B cell (primary cell): ENCODE measurements at regions of chr17 and their contacts with region 1.

Region 1: GRCh38 chr17:67475236-67475937 is 98.3 kb downstream of the PITPNC1 start:
- DNase-seq: peak; percentile 81
- ATAC-seq: peak; percentile 95
- H3K4me3 ChIP-seq: no peak overlapping the region
- H3K4me3 Mint-ChIP-seq: peak overlapping the region; percentile 44
- H3K27ac ChIP-seq: no peak overlapping the region
- H3K27ac Mint-ChIP-seq: peak overlapping the region; percentile 33
- H3K4me1 ChIP-seq: peaks cover 0 to 8% of the 10 kb centered on the region in 2 donors
- H3K4me1 Mint-ChIP-seq: peaks cover 10% of the 10 kb centered on the region
- H3K27me3 ChIP-seq: no peaks in the 10 kb centered on the region
- H3K27me3 Mint-ChIP-seq: no peaks in the 10 kb centered on the region
- CTCF ChIP-seq: peak; percentile 91

Region 2: DNA sequence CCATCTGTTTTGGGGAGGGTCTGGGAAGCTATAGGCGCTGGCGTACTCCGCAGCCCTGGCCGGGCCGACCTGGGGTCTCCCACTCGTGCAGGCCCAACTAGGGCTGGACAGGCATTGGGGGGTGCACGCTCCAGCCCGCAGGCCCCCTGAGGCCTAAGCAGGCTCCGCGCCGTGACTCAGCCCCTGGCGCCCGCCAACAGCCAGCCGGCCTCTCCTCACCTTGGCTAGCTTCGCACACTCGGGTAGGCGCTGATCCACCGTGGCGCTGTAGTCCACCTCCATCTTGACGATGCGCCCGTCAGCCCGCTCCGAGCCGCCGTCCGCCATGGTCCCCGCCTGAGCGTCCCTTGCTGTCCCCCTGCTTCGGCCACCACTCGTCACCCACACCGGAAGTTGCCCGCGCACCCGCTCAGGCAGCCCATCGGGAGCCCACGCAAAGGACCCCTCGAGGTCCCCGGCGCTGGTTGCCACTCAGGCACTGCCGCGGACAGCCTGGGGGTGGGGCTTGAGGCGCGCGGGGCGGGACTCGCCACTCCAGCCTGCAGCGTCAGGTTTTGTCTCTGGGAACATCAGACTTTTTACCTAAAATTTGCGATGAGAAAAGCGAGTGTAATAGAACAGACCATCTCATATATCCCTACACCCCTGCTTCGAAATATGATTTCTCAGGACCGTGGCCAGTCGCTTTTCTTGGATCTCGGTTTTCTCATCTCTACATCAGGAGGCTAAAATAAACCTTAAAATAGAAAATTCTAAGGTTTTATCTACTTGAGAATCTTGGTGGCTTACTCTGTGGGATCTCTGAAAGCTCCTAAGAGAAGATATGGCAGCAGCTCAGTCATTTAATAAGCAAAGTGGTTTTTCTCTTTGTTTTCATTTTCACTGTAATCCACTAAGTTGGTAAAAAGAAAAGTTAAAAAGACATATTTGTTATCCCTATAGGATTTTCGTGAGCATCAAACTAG is 108.9 kb before region 1 on chr17 and contains the start of gene PSMD12:
- CTCF ChIA-PET with region 1: interaction called, 178 read pairs
- POLR2A ChIA-PET with region 1: no interaction called
- intact Hi-C with region 1: no loop called
- DNase-seq: peak; percentile 92
- ATAC-seq: peak; percentile 99
- H3K4me3 ChIP-seq: peak within 1 kb of the TSS; percentile 83 to 97 (median 94)
- H3K4me3 Mint-ChIP-seq: peak within 1 kb of the TSS; percentile 98
- H3K27ac ChIP-seq: peak within 1 kb of the TSS; percentile 85
- H3K27ac Mint-ChIP-seq: peak within 1 kb of the TSS; percentile 97
- H3K4me1 ChIP-seq: peaks cover 21 to 22% of the 10 kb centered on the region in 2 donors
- H3K4me1 Mint-ChIP-seq: peaks cover 38% of the 10 kb centered on the region
- H3K27me3 ChIP-seq: no peaks in the 10 kb centered on the region
- H3K27me3 Mint-ChIP-seq: no peaks in the 10 kb centered on the region
- CTCF ChIP-seq: no peak
- total RNA-seq, gene PSMD12: 36.5 and 36.7 TPM in 2 replicates

Region 3: GRCh38 chr17:67421869-67422273 is 53.5 kb before region 1 on chr17:
- CTCF ChIA-PET with region 1: no interaction called
- POLR2A ChIA-PET with region 1: no interaction called
- intact Hi-C with region 1: no loop called
- DNase-seq: no peak
- ATAC-seq: peak; percentile 21
- H3K4me3 ChIP-seq: no peak overlapping the region
- H3K4me3 Mint-ChIP-seq: no peak overlapping the region
- H3K27ac ChIP-seq: no peak overlapping the region
- H3K27ac Mint-ChIP-seq: no peak overlapping the region
- H3K4me1 ChIP-seq: peaks cover 0 to 4% of the 10 kb centered on the region in 2 donors
- H3K4me1 Mint-ChIP-seq: peaks cover 16% of the 10 kb centered on the region
- H3K27me3 ChIP-seq: no peaks in the 10 kb centered on the region
- H3K27me3 Mint-ChIP-seq: no peaks in the 10 kb centered on the region
- CTCF ChIP-seq: no peak

Region 4: DNA sequence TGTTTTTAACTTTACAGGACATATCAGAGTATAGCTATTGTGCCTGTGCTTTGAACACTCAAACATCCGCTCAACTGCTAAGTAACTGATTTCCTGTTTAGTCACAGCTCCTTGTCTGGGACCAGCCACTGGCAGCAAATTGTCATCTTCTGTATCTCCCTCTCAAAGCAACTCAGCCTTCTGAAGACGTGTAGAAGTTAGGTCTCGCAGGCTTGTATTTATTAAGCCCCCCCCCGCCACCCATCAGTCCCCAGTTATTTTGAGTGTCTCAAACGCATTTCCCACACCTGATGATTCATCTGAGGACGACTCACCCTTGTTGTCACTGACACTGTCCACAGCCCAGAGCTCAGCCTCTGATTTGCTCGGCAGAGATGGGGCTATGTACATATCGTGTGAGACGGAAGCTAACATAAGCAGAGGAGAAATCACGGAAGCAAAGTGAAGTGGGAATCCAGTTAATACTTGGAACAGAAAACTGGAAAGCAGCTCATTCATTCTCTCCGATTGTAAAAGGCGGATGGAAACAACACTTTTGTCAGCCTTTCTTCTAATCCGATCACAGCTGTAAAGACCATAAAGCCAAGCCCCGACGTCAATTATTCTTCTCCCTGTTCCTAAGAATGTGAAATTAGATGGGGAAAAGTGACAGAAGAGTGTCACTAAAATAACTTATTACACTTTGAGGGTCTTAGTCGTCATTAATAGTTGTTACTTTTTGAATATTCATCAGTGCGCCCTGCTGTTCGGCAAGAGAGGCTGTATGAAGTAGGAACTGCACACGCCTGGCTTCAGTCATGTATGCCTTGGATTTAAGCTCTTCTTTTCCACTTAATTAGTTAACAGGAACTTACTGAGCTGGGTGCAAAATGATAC is 34.1 kb before region 1 on chr17:
- CTCF ChIA-PET with region 1: interaction called, 12 read pairs
- POLR2A ChIA-PET with region 1: no interaction called
- intact Hi-C with region 1: no loop called
- DNase-seq: peak; percentile 11
- ATAC-seq: peak; percentile 56
- H3K4me3 ChIP-seq: no peak overlapping the region
- H3K4me3 Mint-ChIP-seq: no peak overlapping the region
- H3K27ac ChIP-seq: no peak overlapping the region
- H3K27ac Mint-ChIP-seq: peak overlapping the region; percentile 3
- H3K4me1 ChIP-seq: peaks cover 0 to 9% of the 10 kb centered on the region in 2 donors
- H3K4me1 Mint-ChIP-seq: peaks cover 9% of the 10 kb centered on the region
- H3K27me3 ChIP-seq: no peaks in the 10 kb centered on the region
- H3K27me3 Mint-ChIP-seq: no peaks in the 10 kb centered on the region
- CTCF ChIP-seq: no peak

Region 5: GRCh38 chr17:67461876-67462275 is 13.5 kb before region 1 on chr17:
- CTCF ChIA-PET with region 1: interaction called, 11 read pairs
- POLR2A ChIA-PET with region 1: interaction called, 4 read pairs
- intact Hi-C with region 1: no loop called
- DNase-seq: no peak
- ATAC-seq: no peak
- H3K4me3 ChIP-seq: no peak overlapping the region
- H3K4me3 Mint-ChIP-seq: no peak overlapping the region
- H3K27ac ChIP-seq: no peak overlapping the region
- H3K27ac Mint-ChIP-seq: no peak overlapping the region
- H3K4me1 ChIP-seq: no peaks in the 10 kb centered on the region
- H3K4me1 Mint-ChIP-seq: peaks cover 10% of the 10 kb centered on the region
- H3K27me3 ChIP-seq: no peaks in the 10 kb centered on the region
- H3K27me3 Mint-ChIP-seq: no peaks in the 10 kb centered on the region
- CTCF ChIP-seq: no peak

Region 6: GRCh38 chr17:67506966-67507365 is 31.6 kb after region 1 on chr17:
- CTCF ChIA-PET with region 1: no interaction called
- POLR2A ChIA-PET with region 1: no interaction called
- intact Hi-C with region 1: no loop called
- DNase-seq: no peak
- ATAC-seq: no peak
- H3K4me3 ChIP-seq: no peak overlapping the region
- H3K4me3 Mint-ChIP-seq: no peak overlapping the region
- H3K27ac ChIP-seq: no peak overlapping the region
- H3K27ac Mint-ChIP-seq: no peak overlapping the region
- H3K4me1 ChIP-seq: no peaks in the 10 kb centered on the region
- H3K4me1 Mint-ChIP-seq: no peaks in the 10 kb centered on the region
- H3K27me3 ChIP-seq: no peaks in the 10 kb centered on the region
- H3K27me3 Mint-ChIP-seq: no peaks in the 10 kb centered on the region
- CTCF ChIP-seq: no peak

Region 7: GRCh38 chr17:67594115-67594880 is 118.9 kb after region 1 on chr17:
- CTCF ChIA-PET with region 1: no interaction called
- POLR2A ChIA-PET with region 1: no interaction called
- intact Hi-C with region 1: no loop called
- DNase-seq: no peak
- ATAC-seq: no peak
- H3K4me3 ChIP-seq: no peak overlapping the region
- H3K4me3 Mint-ChIP-seq: no peak overlapping the region
- H3K27ac ChIP-seq: no peak overlapping the region
- H3K27ac Mint-ChIP-seq: no peak overlapping the region
- H3K4me1 ChIP-seq: no peaks in the 10 kb centered on the region
- H3K4me1 Mint-ChIP-seq: peaks cover 10% of the 10 kb centered on the region
- H3K27me3 ChIP-seq: no peaks in the 10 kb centered on the region
- H3K27me3 Mint-ChIP-seq: no peaks in the 10 kb centered on the region
- CTCF ChIP-seq: no peak

Region 8: GRCh38 chr17:67606471-67606870 is 131.1 kb after region 1 on chr17:
- CTCF ChIA-PET with region 1: no interaction called
- POLR2A ChIA-PET with region 1: no interaction called
- intact Hi-C with region 1: no loop called
- DNase-seq: no peak
- ATAC-seq: no peak
- H3K4me3 ChIP-seq: no peak overlapping the region
- H3K4me3 Mint-ChIP-seq: no peak overlapping the region
- H3K27ac ChIP-seq: no peak overlapping the region
- H3K27ac Mint-ChIP-seq: no peak overlapping the region
- H3K4me1 ChIP-seq: no peaks in the 10 kb centered on the region
- H3K4me1 Mint-ChIP-seq: peaks cover 2% of the 10 kb centered on the region
- H3K27me3 ChIP-seq: no peaks in the 10 kb centered on the region
- H3K27me3 Mint-ChIP-seq: no peaks in the 10 kb centered on the region
- CTCF ChIP-seq: no peak

Region 9: GRCh38 chr17:67689534-67690177 is 214.3 kb after region 1 on chr17:
- CTCF ChIA-PET with region 1: interaction called, 11 read pairs
- POLR2A ChIA-PET with region 1: interaction called, 3 read pairs
- intact Hi-C with region 1: loop called (anchors 5 kb)
- DNase-seq: peak; percentile 71
- ATAC-seq: peak; percentile 63
- H3K4me3 ChIP-seq: no peak overlapping the region
- H3K4me3 Mint-ChIP-seq: no peak overlapping the region
- H3K27ac ChIP-seq: no peak overlapping the region
- H3K27ac Mint-ChIP-seq: no peak overlapping the region
- H3K4me1 ChIP-seq: no peaks in the 10 kb centered on the region
- H3K4me1 Mint-ChIP-seq: peaks cover 4% of the 10 kb centered on the region
- H3K27me3 ChIP-seq: no peaks in the 10 kb centered on the region
- H3K27me3 Mint-ChIP-seq: no peaks in the 10 kb centered on the region
- CTCF ChIP-seq: peak; percentile 96